Activated CD4-positive, alpha-beta memory T cell treated with anti-CD3 and anti-CD28 coated beads for 36 hours (primary cell): ENCODE measurements at regions of chr2 and their contacts with region 1.

Region 1: DNA sequence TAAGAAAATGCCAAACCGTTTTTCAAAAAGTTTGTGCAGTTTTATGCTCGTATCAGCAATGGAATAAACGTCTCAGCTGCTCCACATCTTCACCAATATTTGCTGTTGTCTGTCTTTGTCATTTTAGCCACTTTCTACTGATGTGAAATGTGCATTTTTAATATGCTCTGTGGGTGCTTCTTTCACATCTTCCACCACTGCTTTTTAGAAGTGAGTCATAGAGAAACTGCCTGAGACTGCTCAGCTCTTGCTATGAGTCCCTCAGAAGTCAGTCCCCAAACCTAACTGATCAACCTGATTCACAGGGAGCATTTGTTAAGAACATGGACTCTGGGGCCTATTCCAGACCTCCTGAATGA is 41.0 kb upstream of the EPC2 start:
- DNase-seq: peak; percentile 45
- H3K4me3 Mint-ChIP-seq: no peak overlapping the region
- H3K27ac Mint-ChIP-seq: peak overlapping the region; percentile 87
- H3K4me1 Mint-ChIP-seq: peaks cover 14% of the 10 kb centered on the region
- H3K27me3 Mint-ChIP-seq: peaks cover 7% of the 10 kb centered on the region

Region 2: DNA sequence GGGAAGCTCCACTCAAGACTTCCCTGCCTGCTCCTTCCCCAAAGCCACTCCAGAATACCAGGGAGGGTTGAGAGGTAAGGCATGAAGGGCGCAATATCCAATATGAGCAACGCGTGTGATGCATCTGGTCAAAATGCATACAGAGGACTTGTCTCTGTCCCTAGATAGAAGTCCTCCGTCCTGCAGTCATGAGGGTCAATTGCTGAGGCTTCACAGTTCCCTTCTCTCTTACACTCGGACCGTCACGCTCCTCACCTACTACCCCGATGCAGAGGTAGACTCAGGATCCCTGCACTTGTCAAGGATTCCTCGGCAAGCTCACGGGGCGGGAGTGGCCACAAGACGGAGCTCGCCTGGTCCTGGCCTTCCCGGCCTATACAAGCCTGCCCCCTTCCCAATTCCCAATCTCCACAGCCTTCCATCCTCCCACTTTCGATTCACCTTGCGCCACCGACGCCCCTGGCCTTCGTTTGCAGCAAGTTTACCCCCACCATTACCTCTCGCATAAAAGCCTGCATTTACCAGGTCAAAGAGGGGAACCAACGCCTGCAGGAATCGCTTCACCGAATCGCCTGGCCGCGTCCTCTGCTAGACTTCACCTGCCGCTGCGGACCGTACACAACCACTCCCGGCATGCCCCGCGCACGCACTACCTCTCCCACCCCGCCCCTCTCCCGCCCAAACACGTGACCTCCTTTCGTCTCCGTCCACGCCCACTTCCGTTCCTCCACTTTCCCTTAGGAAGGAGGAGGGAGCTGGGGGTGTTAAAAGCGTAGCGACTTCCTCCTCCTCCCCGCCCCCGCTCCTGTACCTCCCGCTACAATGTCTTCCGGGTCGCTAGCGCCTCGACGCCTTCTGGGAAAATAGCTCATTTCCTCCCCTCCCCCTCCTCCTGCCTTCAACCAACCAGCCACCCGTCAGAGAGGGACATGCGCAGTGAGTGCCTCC is 583.2 kb before region 1 on chr2 and contains the start of gene ORC4:
- CTCF ChIA-PET with region 1: no interaction called
- POLR2A ChIA-PET with region 1: no interaction called
- intact Hi-C with region 1: loop called (anchors 1 kb)
- DNase-seq: peak; percentile 99
- H3K4me3 Mint-ChIP-seq: peak within 1 kb of the TSS; percentile 100
- H3K27ac Mint-ChIP-seq: peak within 1 kb of the TSS; percentile 97
- H3K4me1 Mint-ChIP-seq: peaks cover 39% of the 10 kb centered on the region
- H3K27me3 Mint-ChIP-seq: no peaks in the 10 kb centered on the region
- total RNA-seq, gene ORC4: 34.1 to 34.9 TPM

Region 3: GRCh38 chr2:148479398-148479797 is 124.1 kb before region 1 on chr2:
- CTCF ChIA-PET with region 1: no interaction called
- POLR2A ChIA-PET with region 1: no interaction called
- intact Hi-C with region 1: no loop called
- DNase-seq: no peak
- H3K4me3 Mint-ChIP-seq: no peak overlapping the region
- H3K27ac Mint-ChIP-seq: no peak overlapping the region
- H3K4me1 Mint-ChIP-seq: no peaks in the 10 kb centered on the region
- H3K27me3 Mint-ChIP-seq: no peaks in the 10 kb centered on the region

Region 4: DNA sequence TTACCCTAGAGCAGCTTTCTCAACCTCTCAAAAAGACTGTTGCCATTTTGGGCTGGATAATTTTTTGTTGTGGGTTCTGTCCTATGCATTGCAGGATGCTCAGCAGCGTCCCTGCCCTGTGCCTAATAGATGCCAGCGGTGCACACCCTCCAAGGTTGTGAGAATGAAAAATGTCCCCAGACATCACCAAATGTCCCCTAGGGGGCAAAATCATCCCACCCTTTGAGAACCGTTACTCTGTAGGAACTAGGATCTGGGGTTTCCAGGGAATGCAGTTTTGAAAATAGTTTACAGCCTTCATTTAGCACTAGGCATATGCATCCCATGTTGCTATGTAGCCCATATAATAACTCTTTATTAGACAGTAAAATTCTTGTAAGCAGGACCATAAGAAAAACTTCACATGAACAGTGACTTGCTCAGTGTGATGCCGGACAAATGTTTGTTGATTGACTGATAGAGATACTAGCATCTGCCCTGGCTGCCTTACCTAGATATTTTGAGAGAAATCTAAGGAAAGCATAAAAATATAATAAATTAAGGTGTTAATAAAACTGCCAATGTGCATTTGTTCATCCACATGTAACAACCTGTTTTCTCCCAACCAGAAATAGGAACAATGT is 38.2 kb before region 1 on chr2:
- CTCF ChIA-PET with region 1: no interaction called
- POLR2A ChIA-PET with region 1: no interaction called
- intact Hi-C with region 1: loop called (anchors 5 kb)
- DNase-seq: no peak
- H3K4me3 Mint-ChIP-seq: no peak overlapping the region
- H3K27ac Mint-ChIP-seq: no peak overlapping the region
- H3K4me1 Mint-ChIP-seq: peaks cover 10% of the 10 kb centered on the region
- H3K27me3 Mint-ChIP-seq: no peaks in the 10 kb centered on the region

Region 5: GRCh38 chr2:148614322-148615049 is 10.9 kb after region 1 on chr2:
- CTCF ChIA-PET with region 1: interaction called, 3 read pairs
- POLR2A ChIA-PET with region 1: interaction called, 3 read pairs
- intact Hi-C with region 1: loop called (anchors 1 kb)
- DNase-seq: peak; percentile 28
- H3K4me3 Mint-ChIP-seq: no peak overlapping the region
- H3K27ac Mint-ChIP-seq: peak overlapping the region; percentile 47
- H3K4me1 Mint-ChIP-seq: peaks cover 14% of the 10 kb centered on the region
- H3K27me3 Mint-ChIP-seq: peaks cover 2% of the 10 kb centered on the region

Region 6: GRCh38 chr2:148813603-148814065 is 210.1 kb after region 1 on chr2:
- CTCF ChIA-PET with region 1: interaction called, 3 read pairs
- POLR2A ChIA-PET with region 1: no interaction called
- intact Hi-C with region 1: loop called (anchors 1 kb)
- DNase-seq: peak; percentile 95
- H3K4me3 Mint-ChIP-seq: no peak overlapping the region
- H3K27ac Mint-ChIP-seq: peak overlapping the region; percentile 29
- H3K4me1 Mint-ChIP-seq: peaks cover 22% of the 10 kb centered on the region
- H3K27me3 Mint-ChIP-seq: peaks cover 11% of the 10 kb centered on the region

Region 7: GRCh38 chr2:149167411-149167810 is 563.9 kb after region 1 on chr2:
- CTCF ChIA-PET with region 1: no interaction called
- POLR2A ChIA-PET with region 1: no interaction called
- intact Hi-C with region 1: loop called (anchors 1 kb)
- DNase-seq: peak; percentile 71
- H3K4me3 Mint-ChIP-seq: no peak overlapping the region
- H3K27ac Mint-ChIP-seq: no peak overlapping the region
- H3K4me1 Mint-ChIP-seq: peaks cover 19% of the 10 kb centered on the region
- H3K27me3 Mint-ChIP-seq: peaks cover 10% of the 10 kb centered on the region